ENCODE measurements at regions of chr17 and their contacts with region 1.

Region 1: GRCh38 chr17:78082988-78083387 is 45.6 kb downstream of the TMC6 start:
- DNase-seq: no peak
- ATAC-seq: no peak
- H3K4me3 Mint-ChIP-seq: no peak overlapping the region
- H3K27ac Mint-ChIP-seq: no peak overlapping the region
- H3K4me1 Mint-ChIP-seq: no peaks in the 10 kb centered on the region
- H3K27me3 Mint-ChIP-seq: no peaks in the 10 kb centered on the region
- CTCF ChIP-seq: no peak

Region 2: DNA sequence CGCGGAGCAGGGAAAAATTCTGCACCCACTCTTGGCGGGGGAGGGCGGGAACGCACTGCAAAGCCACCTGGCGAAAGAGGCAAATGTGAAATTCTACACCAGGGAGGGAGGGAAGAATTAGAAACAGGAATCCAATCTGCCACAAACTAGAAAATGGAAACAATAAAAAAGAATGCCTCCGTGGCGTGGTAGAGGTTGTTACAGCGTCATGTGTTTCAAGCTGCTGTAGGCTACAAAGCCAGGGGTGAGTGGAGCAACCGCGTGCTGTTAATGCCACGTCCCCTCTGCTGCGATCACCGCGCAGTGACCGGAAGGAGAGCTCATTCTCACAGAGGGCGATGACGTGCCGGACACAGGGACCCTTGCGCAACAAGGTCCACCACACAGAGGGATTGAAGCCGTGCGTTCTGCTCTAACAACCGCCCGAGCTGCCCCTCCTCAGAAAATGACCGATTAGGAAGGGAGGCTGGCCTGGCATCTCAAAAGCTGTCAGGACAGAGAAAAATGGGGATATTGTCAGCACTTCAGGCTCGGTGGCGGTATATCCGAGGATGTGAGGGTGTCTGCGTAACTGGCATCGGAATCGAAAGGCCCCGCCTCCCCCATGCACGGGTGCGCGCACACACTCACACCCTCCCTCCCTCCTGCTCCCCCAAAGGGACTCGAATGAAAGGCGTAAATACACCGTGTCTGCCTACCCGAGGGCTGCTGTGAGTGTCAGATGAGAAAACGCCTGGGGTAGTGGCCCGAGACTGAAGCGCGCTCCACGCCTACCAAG is 195.3 kb before region 1 on chr17:
- CTCF ChIA-PET with region 1: no interaction called
- POLR2A ChIA-PET with region 1: no interaction called
- intact Hi-C with region 1: no loop called
- DNase-seq: peak; percentile 80
- ATAC-seq: peak; percentile 88
- H3K4me3 Mint-ChIP-seq: peak overlapping the region; percentile 66
- H3K27ac Mint-ChIP-seq: peak overlapping the region; percentile 69
- H3K4me1 Mint-ChIP-seq: peaks cover 52% of the 10 kb centered on the region
- H3K27me3 Mint-ChIP-seq: peaks cover 2% of the 10 kb centered on the region
- CTCF ChIP-seq: no peak

Region 3: GRCh38 chr17:78058001-78058400 is 25.0 kb before region 1 on chr17:
- CTCF ChIA-PET with region 1: interaction called, 11 read pairs
- POLR2A ChIA-PET with region 1: no interaction called
- intact Hi-C with region 1: no loop called
- DNase-seq: no peak
- ATAC-seq: no peak
- H3K4me3 Mint-ChIP-seq: no peak overlapping the region
- H3K27ac Mint-ChIP-seq: no peak overlapping the region
- H3K4me1 Mint-ChIP-seq: peaks cover 30% of the 10 kb centered on the region
- H3K27me3 Mint-ChIP-seq: no peaks in the 10 kb centered on the region
- CTCF ChIP-seq: no peak

Region 4: GRCh38 chr17:78101112-78101511 is 18.1 kb after region 1 on chr17:
- CTCF ChIA-PET with region 1: interaction called, 53 read pairs
- POLR2A ChIA-PET with region 1: no interaction called
- intact Hi-C with region 1: no loop called
- DNase-seq: no peak
- ATAC-seq: no peak
- H3K4me3 Mint-ChIP-seq: no peak overlapping the region
- H3K27ac Mint-ChIP-seq: no peak overlapping the region
- H3K4me1 Mint-ChIP-seq: no peaks in the 10 kb centered on the region
- H3K27me3 Mint-ChIP-seq: no peaks in the 10 kb centered on the region
- CTCF ChIP-seq: no peak

Region 5: GRCh38 chr17:78186692-78187595 is 104.0 kb after region 1 on chr17 and contains the starts of genes AFMID and TK1:
- CTCF ChIA-PET with region 1: interaction called, 12 read pairs
- POLR2A ChIA-PET with region 1: no interaction called
- intact Hi-C with region 1: no loop called
- DNase-seq: peak; percentile 96
- ATAC-seq: peak; percentile 98
- H3K4me3 Mint-ChIP-seq: peak within 1 kb of the TSS; percentile 93
- H3K27ac Mint-ChIP-seq: peak within 1 kb of the TSS; percentile 82
- H3K4me1 Mint-ChIP-seq: peaks cover 32% of the 10 kb centered on the region
- H3K27me3 Mint-ChIP-seq: no peaks in the 10 kb centered on the region
- CTCF ChIP-seq: no peak
- total RNA-seq, gene AFMID: 20.8 to 27.9 TPM
- total RNA-seq, gene TK1: 175 to 179 TPM

Region 6: DNA sequence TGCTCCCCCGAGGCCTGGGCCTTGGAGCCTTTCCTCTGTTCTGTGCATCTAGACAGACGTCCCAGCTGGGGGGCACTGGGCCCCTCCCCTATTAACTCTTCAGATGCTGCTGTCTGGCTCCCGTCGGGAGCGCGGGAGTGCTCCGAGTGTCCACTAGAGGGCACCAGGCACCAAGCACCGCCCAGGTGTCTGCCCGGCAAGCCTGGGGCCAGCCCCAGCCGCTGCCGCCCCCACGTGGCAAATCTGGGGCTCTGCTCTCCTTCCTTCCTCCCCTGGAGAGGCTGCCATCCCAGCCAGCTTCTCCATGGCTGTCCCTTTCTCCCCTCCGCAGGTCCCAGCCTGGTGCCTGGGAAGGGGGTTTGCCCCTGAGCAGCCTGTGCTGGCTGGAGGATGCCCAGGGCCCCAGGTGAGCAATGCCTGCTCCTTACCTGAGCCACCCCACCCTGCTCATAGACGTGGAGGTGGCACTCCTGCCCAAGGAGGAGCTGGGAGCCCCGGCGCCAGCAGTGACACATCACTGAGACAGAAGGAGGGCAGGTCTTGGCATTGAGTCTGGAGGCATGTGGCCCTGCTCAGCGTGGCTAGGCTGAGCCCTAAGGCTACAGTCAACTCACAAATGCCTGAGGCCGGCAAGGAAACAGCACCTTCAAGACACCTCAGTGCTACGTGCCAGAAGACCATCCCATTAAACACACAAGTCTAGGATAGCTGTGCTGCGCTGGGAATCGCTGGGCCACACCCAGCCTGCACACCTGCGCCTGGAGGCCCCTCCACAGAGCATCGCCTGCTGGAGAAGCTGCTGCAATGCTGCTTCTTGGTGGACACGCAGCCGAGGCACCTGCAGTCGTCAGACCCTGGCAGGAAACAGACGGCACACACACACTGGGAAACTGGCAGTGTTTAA is 168.2 kb after region 1 on chr17:
- CTCF ChIA-PET with region 1: interaction called, 17 read pairs
- POLR2A ChIA-PET with region 1: no interaction called
- intact Hi-C with region 1: no loop called
- DNase-seq: peak; percentile 89
- ATAC-seq: peak; percentile 78
- H3K4me3 Mint-ChIP-seq: peak overlapping the region; percentile 29
- H3K27ac Mint-ChIP-seq: peak overlapping the region; percentile 61
- H3K4me1 Mint-ChIP-seq: peaks cover 32% of the 10 kb centered on the region
- H3K27me3 Mint-ChIP-seq: no peaks in the 10 kb centered on the region
- CTCF ChIP-seq: peak; percentile 98

Measured in activated CD8-positive, alpha-beta T cell treated with anti-CD3 and anti-CD28 coated beads for 36 hours (primary cell).